Right ventricle myocardium superior (tissue), 1 donor: ENCODE measurements at regions of chr11 and their contacts with region 1.

Region 1: DNA sequence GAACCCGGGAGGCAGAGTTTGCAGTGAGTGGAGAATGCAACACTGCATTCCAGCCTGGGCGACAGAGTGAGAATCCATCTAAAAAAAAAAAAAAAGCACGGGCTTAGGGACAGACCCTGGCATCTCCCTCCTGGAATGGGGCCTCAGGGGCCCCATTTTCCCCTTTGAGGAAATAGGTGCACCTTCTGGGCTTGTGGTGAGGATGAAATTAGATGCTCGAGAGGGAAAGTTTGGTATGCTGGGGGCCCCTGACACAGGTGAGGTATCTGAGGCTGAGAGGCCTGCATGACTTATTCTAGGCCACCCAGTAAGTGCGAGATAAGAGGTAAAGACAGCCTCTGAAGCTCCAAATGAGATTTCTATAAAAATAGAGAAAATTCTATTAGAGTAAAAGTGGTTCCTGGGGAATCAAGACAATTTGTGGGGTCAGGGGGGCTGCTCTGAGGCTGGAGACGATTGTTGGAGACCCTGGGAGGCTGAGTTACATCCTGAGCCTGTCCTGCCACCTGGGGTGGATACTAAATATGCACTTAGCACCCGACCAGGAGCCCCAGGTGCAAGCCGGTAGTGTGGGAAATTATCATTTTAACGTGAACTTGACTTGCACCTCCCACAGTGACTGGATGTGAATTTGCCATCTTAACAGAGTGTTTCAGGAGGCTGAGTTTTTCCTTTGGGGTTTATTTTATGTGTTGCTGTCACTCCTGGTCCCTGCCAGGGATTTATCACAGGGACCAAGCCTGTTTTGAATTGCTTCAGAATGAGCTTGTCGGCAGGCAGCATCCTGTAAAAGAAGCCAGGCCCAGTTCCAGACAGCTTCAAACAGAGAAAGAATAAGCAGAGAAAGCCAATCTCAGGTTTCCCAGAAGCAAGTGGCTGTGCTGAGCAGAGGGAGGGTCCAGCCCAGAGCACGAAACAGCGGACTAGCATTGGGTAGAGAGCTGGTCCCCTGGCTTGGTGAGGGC is 48.4 kb upstream of the TSKU start:
- DNase-seq: no peak
- ATAC-seq: no peak

Region 2: DNA sequence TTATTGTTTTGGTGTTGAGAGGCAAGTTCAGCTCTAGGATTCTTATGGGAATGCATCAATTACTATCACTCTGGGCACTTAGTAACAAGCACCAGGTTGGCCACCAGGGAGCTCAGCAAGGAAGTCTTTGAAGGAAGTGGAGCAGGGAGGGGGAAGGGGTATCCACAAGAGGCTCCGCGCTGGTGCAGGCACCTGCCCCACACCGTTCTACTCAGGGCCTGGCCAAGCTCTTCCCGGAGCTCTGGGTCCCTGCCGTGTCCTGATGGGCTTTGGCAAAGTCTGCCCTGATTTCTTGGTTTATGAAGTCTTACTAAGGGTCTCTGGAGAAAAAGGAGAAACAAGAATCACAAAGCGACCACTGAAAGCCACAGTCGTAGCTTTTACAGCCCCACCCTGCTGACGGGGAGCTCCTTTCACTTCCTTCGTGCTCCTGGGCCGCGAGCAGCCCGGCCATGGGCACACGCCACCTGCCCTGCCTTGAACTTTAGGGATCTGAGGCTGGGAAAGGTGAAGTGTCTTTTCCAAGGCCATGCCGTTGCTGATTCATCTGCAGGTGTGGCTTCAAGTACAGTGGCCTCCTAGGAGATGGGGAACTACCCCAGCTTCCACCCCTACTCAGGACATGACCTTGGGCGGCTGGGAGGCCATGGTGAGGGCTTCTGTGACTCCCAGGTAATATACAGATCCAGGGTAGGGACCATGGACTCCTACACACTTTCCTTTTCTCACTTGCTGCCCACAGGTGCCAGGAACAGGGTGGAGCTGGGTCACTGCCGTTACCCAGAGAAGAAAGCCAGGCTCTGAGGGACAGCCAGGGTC is 48.3 kb before region 1 on chr11:
- intact Hi-C with region 1: no loop called
- DNase-seq: no peak
- ATAC-seq: no peak

Region 3: DNA sequence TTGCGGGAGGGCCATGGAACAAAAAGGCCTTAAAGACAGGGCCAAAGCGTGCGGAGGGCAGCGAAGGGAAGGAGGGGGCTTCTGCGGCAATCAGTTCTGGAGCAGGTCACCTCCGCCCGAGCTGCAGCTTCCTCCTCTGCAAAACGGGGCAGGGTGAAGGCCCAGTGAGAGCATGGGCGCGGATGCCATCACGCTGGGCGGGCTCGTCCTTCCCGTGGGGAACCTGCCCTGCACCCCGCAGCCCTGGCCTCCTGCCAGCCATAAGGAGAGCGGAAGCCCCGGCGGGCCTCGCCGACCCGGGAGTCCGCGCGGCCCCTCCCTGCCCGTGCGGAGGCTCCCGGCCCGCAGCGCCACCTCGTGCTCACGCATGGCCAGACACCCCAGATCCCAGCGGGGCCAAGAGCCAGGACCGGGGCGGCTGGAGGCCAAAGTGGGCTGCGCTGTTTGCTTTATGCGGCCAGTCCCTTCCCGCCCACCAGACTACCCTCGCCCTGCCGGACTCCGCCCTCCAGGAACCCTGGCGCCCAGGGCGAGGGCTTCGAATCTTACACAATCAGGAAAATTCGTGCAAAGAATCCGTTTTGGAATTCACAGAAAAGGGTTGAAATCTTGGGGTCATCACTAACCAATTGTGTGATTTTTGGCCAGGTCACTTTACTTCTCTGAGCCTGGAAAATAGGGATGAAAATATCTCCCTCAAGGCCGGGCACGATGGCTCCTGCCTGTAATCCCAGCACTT is 64.5 kb after region 1 on chr11:
- intact Hi-C with region 1: loop called (anchors 1 kb)
- DNase-seq: peak; percentile 94
- ATAC-seq: peak; percentile 93

Region 4: DNA sequence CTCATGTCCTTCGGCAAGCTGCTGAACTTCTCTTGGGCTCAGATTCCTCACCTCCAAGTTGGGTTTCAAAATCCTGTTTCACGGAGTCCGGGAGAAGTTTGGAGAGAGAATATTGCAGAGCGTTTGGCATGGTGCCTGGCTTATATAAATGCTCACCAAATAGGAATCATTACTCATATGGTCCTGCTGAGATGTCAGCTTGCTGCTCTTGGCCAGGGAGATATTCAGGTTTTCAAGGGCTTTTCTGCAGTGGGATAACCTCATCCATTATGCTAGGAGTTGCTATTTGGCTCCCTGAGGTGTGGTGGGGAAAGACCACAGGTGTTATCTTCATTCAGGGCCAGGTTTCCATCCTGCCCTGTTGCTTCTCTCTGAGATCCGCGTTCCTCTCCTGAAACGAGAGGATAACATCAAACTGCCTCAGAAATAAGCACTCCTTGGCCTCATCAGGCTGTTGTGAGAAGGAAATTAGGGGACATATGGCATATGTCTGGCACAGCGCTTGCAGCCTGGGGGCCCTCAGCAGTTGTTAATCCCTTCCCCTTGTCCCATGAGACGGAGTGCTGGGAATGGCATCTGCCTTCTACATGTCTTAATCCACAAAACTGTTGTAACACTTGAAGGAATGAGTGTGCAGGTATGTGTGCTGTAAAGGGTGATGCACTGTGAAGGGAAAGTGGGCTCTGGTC is 96.0 kb after region 1 on chr11:
- intact Hi-C with region 1: no loop called
- DNase-seq: no peak
- ATAC-seq: no peak